Motor neuron (in vitro differentiated cells): ENCODE measurements at regions of chr18 and their contacts with region 1.

Region 1: GRCh38 chr18:23126376-23127056 is 8.8 kb upstream of the CABLES1 start:
- ATAC-seq: peak in 6 of 8 experiments; percentile 26 to 78 (median 54)
- H3K4me3 ChIP-seq: no peak overlapping the region
- H3K27ac ChIP-seq: no peak overlapping the region
- H3K4me1 ChIP-seq: peaks cover 0 to 4% of the 10 kb centered on the region in 2 donors

Region 2: GRCh38 chr18:23416298-23416697 is 289.8 kb after region 1 on chr18:
- in situ Hi-C with region 1: loop called in 1 of 9 experiments (anchors 10 kb)
- ATAC-seq: no peak
- H3K4me3 ChIP-seq: no peak overlapping the region
- H3K27ac ChIP-seq: no peak overlapping the region
- H3K4me1 ChIP-seq: no peaks in the 10 kb centered on the region